ENCODE measurements at regions of chr4 and their contacts with region 1.

Region 1: GRCh38 chr4:52750819-52751486 is at the start of gene ERVMER34-1:
- DNase-seq: peak in 5 of 10 donors; percentile 22 to 84 (median 76)

Region 2: GRCh38 chr4:52824603-52825459 is 73.9 kb after region 1 on chr4:
- intact Hi-C with region 1: no loop called
- DNase-seq: no peak

Region 3: GRCh38 chr4:52968691-52969090 is 217.7 kb after region 1 on chr4:
- intact Hi-C with region 1: loop called (anchors 10 kb)
- DNase-seq: no peak